Naive thymus-derived CD4-positive, alpha-beta T cell (primary cell): ENCODE measurements at regions of chr3 and their contacts with region 1.

Region 1: GRCh38 chr3:156525808-156526207 is 29.1 kb downstream of the SSR3 start:
- DNase-seq: no peak
- ATAC-seq: no peak
- H3K4me3 ChIP-seq: no peak overlapping the region
- H3K4me3 Mint-ChIP-seq: peak overlapping the region in 1 of 10 donors; percentile 20
- H3K27ac ChIP-seq: no peak overlapping the region
- H3K27ac Mint-ChIP-seq: peak overlapping the region in 1 of 9 donors; percentile 52
- H3K4me1 ChIP-seq: peaks cover 6 to 10% of the 10 kb centered on the region in 2 donors
- H3K4me1 Mint-ChIP-seq: peaks cover 5 to 24% (median 13%) of the 10 kb centered on the region in 7 donors
- H3K27me3 ChIP-seq: no peaks in the 10 kb centered on the region
- H3K27me3 Mint-ChIP-seq: peaks cover 10 to 54% (median 19%) of the 10 kb centered on the region in 5 donors

Region 2: DNA sequence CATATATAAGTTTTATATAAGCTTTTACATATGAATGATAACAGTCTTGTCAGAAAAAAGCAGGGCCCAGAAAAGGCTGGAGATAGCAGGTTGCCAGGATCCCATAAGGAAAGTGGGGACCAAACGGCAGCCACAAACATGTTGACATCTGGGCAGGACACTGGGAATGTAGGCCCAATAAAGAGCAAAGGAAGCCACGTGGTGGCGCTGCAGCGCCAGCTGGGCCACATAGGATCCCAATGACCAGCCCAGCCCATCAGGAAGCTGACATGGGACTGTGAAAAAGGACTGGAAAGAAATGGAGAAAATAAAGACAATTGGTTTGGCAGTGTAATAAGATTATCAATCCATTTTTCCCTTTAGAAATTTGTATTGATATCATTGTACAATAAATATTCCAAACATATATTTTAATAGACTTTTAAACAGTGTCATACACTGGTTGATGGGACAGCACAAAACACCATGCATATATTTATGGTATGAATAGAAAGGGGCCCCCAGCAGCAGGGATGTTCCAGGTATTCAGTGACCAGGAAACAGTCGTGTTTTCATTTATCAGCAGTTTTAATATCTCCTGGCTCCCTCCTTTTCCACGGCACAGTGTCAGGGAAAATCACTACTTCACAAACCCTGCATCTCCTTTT is 1143.3 kb before region 1 on chr3:
- CTCF ChIA-PET with region 1: no interaction called
- POLR2A ChIA-PET with region 1: no interaction called
- intact Hi-C with region 1: no loop called
- DNase-seq: no peak
- ATAC-seq: no peak
- H3K4me3 ChIP-seq: no peak overlapping the region
- H3K4me3 Mint-ChIP-seq: no peak overlapping the region
- H3K27ac ChIP-seq: no peak overlapping the region
- H3K27ac Mint-ChIP-seq: no peak overlapping the region
- H3K4me1 ChIP-seq: no peaks in the 10 kb centered on the region
- H3K4me1 Mint-ChIP-seq: no peaks in the 10 kb centered on the region
- H3K27me3 ChIP-seq: no peaks in the 10 kb centered on the region
- H3K27me3 Mint-ChIP-seq: peaks cover 0 to 18% (median 4%) of the 10 kb centered on the region in 5 donors

Region 3: DNA sequence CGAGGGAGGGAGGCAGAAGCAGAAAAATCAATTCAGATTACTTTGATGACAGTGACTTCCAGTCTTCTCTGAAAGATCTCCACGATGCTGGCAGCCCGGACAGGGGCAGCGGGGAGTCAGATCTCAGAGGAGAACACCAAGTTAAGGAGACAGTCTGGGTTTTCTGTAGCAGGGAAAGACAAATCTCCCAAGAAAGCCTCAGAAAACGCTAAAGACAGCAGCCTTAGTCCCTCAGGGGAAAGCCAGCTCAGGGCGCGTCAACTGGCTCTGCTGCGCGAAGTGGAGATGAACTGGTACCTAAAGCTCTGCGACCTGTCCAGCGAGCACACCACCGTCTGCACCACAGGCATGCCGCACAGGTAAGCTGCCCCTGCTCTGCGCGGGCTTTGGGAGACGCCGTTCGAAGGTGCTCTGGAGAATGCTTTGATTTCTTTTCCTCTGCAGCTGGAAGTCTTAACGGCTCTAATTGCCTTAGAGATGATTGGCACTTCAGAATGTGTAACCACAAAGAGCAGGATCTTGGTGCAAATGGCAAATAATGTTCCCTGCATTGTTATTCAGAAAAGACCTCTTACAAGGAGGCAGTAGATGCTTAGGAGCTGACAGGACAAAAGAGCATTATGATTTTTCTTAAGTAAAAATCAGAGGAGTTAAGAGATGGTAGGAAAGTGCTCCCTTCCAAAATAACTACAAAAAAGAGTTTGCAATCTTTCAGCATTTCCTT is 405.1 kb before region 1 on chr3 and contains the start of gene KCNAB1:
- CTCF ChIA-PET with region 1: no interaction called
- POLR2A ChIA-PET with region 1: no interaction called
- intact Hi-C with region 1: no loop called
- DNase-seq: no peak
- ATAC-seq: no peak
- H3K4me3 ChIP-seq: no peak within 1 kb of the TSS
- H3K4me3 Mint-ChIP-seq: no peak within 1 kb of the TSS
- H3K27ac ChIP-seq: no peak within 1 kb of the TSS
- H3K27ac Mint-ChIP-seq: no peak within 1 kb of the TSS
- H3K4me1 ChIP-seq: no peaks in the 10 kb centered on the region
- H3K4me1 Mint-ChIP-seq: no peaks in the 10 kb centered on the region
- H3K27me3 ChIP-seq: no peaks in the 10 kb centered on the region
- H3K27me3 Mint-ChIP-seq: peaks cover 0 to 22% (median 6%) of the 10 kb centered on the region in 5 donors
- total RNA-seq, gene KCNAB1: not detected

Region 4: DNA sequence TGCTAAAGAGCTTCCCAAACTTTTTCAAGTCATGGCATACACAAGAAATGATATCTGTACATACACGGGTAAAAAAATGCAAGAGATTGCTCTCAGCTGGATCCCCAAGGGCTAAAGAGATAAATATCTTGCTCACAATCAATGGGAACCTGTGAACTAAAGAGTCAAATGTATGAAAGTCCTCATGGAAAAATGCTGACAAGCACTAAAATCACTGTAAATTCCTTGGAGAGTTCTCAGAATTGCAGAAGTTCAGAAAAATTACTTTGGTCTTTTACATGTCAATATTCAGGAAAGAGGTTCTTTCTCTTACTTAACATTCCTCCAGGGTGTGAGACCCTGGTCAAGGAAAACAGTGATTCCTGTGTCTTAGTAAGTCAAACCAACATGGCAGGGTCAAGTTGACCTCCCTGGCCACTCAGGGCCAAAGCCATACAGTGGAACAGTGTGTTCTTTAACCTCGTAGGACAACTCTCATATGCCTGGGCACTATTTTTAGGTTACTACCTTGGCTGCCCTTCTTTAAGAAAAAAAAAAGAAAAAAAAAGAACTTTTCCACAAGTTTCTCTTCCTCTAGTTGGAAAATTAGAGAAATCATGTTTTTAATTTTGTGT is 16.4 kb after region 1 on chr3:
- CTCF ChIA-PET with region 1: interaction called, 5 read pairs
- POLR2A ChIA-PET with region 1: no interaction called
- intact Hi-C with region 1: loop called (anchors 1 to 2 kb)
- DNase-seq: no peak
- ATAC-seq: no peak
- H3K4me3 ChIP-seq: no peak overlapping the region
- H3K4me3 Mint-ChIP-seq: no peak overlapping the region
- H3K27ac ChIP-seq: no peak overlapping the region
- H3K27ac Mint-ChIP-seq: no peak overlapping the region
- H3K4me1 ChIP-seq: no peaks in the 10 kb centered on the region
- H3K4me1 Mint-ChIP-seq: peaks cover 7 to 28% (median 12%) of the 10 kb centered on the region in 7 donors
- H3K27me3 ChIP-seq: no peaks in the 10 kb centered on the region
- H3K27me3 Mint-ChIP-seq: no peaks in the 10 kb centered on the region